H1 (cell line): ENCODE measurements at regions of chr4 and their contacts with region 1.

Region 1: DNA sequence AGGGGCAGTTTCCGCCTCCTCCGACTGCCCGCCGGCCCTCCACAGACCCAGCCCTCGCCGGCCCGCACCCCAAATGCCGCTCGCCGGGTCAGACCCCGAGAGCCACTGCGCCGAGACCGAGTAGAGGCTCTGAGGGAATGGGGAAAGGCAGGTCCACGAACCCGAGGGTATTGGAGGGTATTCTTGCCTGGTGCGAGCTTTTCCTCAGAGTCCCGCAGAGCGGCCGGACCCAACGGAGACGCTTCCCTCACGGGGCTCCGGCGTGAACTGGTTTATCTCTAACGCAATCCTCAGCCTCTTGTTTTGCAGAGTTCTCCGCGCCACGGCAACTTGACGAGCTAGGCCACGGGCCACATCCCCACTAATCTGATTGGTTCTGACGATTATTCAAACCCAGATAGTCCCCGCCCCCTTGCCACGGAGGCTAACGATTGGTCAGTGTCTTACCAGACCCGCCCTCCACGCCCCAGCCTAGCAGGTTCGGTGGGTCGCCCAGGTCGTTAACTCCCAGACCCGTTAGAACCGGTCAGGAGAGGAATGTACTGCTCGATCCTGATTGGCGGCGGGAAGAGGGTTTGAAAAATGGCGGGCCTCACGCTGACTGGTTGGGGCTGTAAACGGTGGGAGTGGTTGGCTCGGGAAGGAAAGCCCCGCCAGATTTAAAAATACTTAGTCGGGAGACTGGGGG is at the start of gene HMGB2:
- DNase-seq: peak; percentile 99 to 100
- H3K4me3 ChIP-seq: peak within 1 kb of the TSS; percentile 73 to 99 (median 94)
- H3K27ac ChIP-seq: peak within 1 kb of the TSS; percentile 100
- H3K4me1 ChIP-seq: peaks cover 0 to 3% (median 3%) of the 10 kb centered on the region in 4 experiments; a peak in 6 of 7 replicates
- H3K27me3 ChIP-seq: no peaks in the 10 kb centered on the region
- CTCF ChIP-seq: no peak
- EP300 ChIP-seq: peak in 1 of 2 experiments; percentile 11; a peak in 1 of 3 replicates
- POLR2A ChIP-seq: peak; percentile 95 to 99
- RAD21 ChIP-seq: no peak
- total RNA-seq, gene HMGB2: 212 and 218 TPM in 2 replicates

Region 2: GRCh38 chr4:173252024-173252935 is 81.9 kb before region 1 on chr4:
- CTCF ChIA-PET with region 1: no interaction called
- POLR2A ChIA-PET with region 1: no interaction called
- DNase-seq: no peak
- H3K4me3 ChIP-seq: no peak overlapping the region
- H3K27ac ChIP-seq: no peak overlapping the region
- H3K4me1 ChIP-seq: peaks cover 2 to 23% (median 4%) of the 10 kb centered on the region in 4 experiments; a peak in 5 of 7 replicates
- H3K27me3 ChIP-seq: no peaks in the 10 kb centered on the region; a peak in 1 of 7 replicates
- CTCF ChIP-seq: no peak
- EP300 ChIP-seq: no peak
- POLR2A ChIP-seq: no peak
- RAD21 ChIP-seq: no peak

Region 3: DNA sequence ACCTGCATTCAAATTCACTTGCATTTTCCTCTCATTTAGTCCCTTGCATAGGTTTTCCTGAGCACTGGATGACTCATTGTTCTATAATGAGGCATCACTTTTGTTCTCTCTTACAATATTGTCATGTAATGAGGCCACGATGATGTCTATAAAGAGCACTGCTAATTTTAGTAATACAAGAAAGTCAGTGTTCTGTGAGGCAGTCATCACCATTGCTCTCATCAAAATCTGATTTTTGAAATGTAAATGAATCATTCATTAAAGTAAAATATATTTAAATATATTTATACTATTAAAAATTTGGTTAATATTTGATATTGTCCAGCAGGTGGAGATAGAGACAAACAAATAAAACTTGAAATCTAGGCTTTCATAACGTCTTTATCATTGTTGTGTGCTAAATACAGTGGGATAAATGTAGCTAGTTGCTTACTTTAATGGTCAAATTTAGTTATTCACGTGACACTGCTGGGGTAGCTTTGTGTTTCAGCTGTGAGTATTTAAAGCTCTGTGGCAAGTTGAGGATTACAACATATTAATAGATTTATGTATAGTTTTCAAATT is 15.5 kb before region 1 on chr4:
- CTCF ChIA-PET with region 1: interaction called, 4 read pairs
- POLR2A ChIA-PET with region 1: interaction called, 91 read pairs
- DNase-seq: no peak
- H3K4me3 ChIP-seq: peak overlapping the region in 1 of 4 experiments; percentile 29; a peak in 1 of 8 replicates
- H3K27ac ChIP-seq: no peak overlapping the region
- H3K4me1 ChIP-seq: peaks cover 0 to 4% (median 3%) of the 10 kb centered on the region in 4 experiments; a peak in 4 of 7 replicates
- H3K27me3 ChIP-seq: no peaks in the 10 kb centered on the region
- CTCF ChIP-seq: no peak
- EP300 ChIP-seq: no peak
- POLR2A ChIP-seq: no peak
- RAD21 ChIP-seq: no peak

Region 4: GRCh38 chr4:173346074-173346473 is 11.8 kb after region 1 on chr4:
- CTCF ChIA-PET with region 1: interaction called, 6 read pairs
- POLR2A ChIA-PET with region 1: interaction called, 48 read pairs
- DNase-seq: no peak
- H3K4me3 ChIP-seq: no peak overlapping the region
- H3K27ac ChIP-seq: no peak overlapping the region
- H3K4me1 ChIP-seq: peaks cover 0 to 9% (median 3%) of the 10 kb centered on the region in 4 experiments; a peak in 3 of 7 replicates
- H3K27me3 ChIP-seq: no peaks in the 10 kb centered on the region
- CTCF ChIP-seq: no peak
- EP300 ChIP-seq: no peak
- POLR2A ChIP-seq: no peak
- RAD21 ChIP-seq: no peak

Region 5: DNA sequence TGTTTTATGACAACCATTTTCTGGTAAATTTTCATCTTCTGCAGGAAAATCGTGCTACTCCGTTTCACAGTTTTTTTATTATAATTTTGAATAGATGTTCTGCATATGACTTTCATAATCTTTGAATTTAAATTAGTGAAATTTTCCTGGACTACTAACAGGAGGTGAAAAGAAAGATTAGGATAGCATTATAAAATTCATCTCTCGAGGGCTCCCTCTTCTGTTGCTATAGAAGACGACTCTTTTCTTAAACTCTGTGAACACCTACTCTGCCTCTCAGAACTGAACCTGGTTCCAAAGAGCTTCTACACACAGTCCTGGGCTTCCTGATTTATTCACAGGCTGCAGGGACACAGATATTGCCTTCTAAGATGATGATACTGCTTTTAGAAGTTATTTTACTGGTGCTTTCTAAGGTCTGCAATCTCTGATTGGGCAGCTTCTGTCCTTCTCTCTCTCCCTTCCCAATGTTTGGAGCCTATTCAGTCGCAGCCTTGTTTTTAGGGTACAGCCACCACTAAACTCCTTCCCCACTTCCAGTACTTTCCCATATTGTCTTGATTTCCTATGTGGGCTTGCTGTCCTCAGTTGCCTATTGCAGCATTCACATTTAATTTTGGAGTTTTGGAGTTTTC is 26.5 kb after region 1 on chr4:
- CTCF ChIA-PET with region 1: interaction called, 4 read pairs
- POLR2A ChIA-PET with region 1: interaction called, 29 read pairs
- DNase-seq: no peak
- H3K4me3 ChIP-seq: no peak overlapping the region
- H3K27ac ChIP-seq: no peak overlapping the region
- H3K4me1 ChIP-seq: no peaks in the 10 kb centered on the region
- H3K27me3 ChIP-seq: no peaks in the 10 kb centered on the region
- CTCF ChIP-seq: peak in 2 of 3 experiments; percentile 22 to 34; a peak in 2 of 4 replicates
- EP300 ChIP-seq: no peak
- POLR2A ChIP-seq: no peak
- RAD21 ChIP-seq: peak; percentile 19 to 35; a peak in 3 of 4 replicates

Region 6: DNA sequence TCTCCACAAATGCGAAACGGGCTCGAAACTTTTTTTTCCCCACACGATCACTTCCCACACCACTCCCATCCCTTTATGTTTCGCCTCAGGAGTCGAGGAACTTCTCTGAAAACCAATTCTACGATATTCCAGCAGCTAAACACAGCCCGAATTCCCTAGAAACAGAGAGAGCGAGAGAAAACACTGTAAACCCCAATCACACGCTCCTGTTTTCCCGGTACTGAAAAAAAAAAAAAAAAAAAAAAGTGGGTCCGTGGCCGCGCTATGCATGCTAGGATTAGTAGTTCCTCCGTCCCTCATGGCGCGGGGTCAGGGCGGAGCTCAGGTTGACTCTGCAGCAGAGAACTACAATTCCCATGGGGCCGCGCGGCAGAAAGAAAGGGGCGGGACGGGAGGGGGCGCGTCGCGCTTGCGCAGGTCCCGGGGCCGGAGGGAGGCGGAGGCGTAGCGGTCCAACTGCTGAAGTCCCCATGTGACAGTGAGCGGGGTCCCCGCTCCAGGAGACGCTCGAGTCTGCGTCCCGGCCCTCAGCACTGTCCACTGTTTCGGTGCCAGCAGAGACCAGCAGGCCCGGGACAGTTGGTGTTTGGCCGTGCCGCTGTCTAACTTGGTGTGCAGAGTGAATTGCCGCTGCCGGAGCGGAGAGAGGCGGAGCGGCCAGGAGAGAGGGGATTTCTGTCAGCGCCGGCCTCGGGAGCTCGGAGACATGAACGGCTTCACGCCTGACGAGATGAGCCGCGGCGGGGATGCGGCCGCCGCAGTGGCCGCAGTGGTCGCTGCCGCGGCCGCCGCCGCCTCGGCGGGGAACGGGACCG is 36.5 kb after region 1 on chr4 and contains the start of gene SAP30:
- CTCF ChIA-PET with region 1: interaction called, 12 read pairs
- POLR2A ChIA-PET with region 1: interaction called, 123 read pairs
- DNase-seq: peak; percentile 90 to 94
- H3K4me3 ChIP-seq: peak within 1 kb of the TSS; percentile 68 to 90 (median 88)
- H3K27ac ChIP-seq: 0 out of 2 replicates have a peak within 1 kb of the TSS, but pooled peaks have one; percentile 30
- H3K4me1 ChIP-seq: no peaks in the 10 kb centered on the region; a peak in 1 of 7 replicates
- H3K27me3 ChIP-seq: no peaks in the 10 kb centered on the region
- CTCF ChIP-seq: no peak
- EP300 ChIP-seq: no peak
- POLR2A ChIP-seq: peak; percentile 66 to 73
- RAD21 ChIP-seq: no peak
- total RNA-seq, gene SAP30: 17.9 and 21.1 TPM in 2 replicates